Pancreas (tissue), 10 donors: ENCODE measurements at regions of chr11 and their contacts with region 1.

Region 1: DNA sequence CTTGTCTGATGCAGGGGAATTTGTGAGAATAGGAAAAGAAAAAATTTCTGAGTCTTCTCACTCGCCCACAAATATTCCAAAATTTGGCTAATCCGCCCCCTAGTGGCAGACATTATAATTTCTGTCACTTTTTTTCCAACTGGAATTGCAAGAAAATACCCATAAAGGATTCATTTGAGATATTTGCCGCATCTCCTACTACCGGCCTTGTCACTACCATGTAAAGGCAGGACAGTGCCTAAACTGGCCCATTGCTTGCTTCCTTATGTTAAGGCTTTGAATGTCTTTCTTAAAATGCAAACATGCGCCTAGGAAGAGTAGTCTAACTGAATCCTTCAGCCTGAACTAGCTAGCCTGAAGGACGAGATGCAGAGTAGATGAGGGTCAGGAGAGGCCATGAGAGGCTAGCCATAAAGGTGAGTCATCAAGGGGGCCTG is 9.3 kb upstream of the CEP295 start:
- DNase-seq: peak in 2 of 6 donors; percentile 13 to 34
- ATAC-seq: peak in 3 of 4 donors; percentile 56 to 59 (median 57)
- H3K4me3 ChIP-seq: no peak overlapping the region
- H3K27ac ChIP-seq: no peak overlapping the region
- H3K4me1 ChIP-seq: no peaks in the 10 kb centered on the region
- H3K27me3 ChIP-seq: no peaks in the 10 kb centered on the region
- CTCF ChIP-seq: peak; percentile 73 to 92 (median 84)

Region 2: GRCh38 chr11:93234602-93235207 is 417.5 kb before region 1 on chr11:
- intact Hi-C with region 1: loop called in 2 of 3 experiments (anchors 5 to 10 kb)
- DNase-seq: peak; percentile 70 to 87 (median 78)
- ATAC-seq: peak; percentile 94 to 99 (median 98)
- H3K4me3 ChIP-seq: no peak overlapping the region
- H3K27ac ChIP-seq: no peak overlapping the region
- H3K4me1 ChIP-seq: peaks cover 0 to 5% (median 0%) of the 10 kb centered on the region in 3 donors
- H3K27me3 ChIP-seq: no peaks in the 10 kb centered on the region
- CTCF ChIP-seq: peak; percentile 69 to 90 (median 86)

Region 3: GRCh38 chr11:93591247-93591898 is 60.8 kb before region 1 on chr11:
- intact Hi-C with region 1: no loop called
- DNase-seq: no peak
- ATAC-seq: no peak
- H3K4me3 ChIP-seq: no peak overlapping the region
- H3K27ac ChIP-seq: no peak overlapping the region
- H3K4me1 ChIP-seq: peaks cover 0 to 8% (median 5%) of the 10 kb centered on the region in 3 donors
- H3K27me3 ChIP-seq: no peaks in the 10 kb centered on the region
- CTCF ChIP-seq: no peak